GM12878 (cell line): ENCODE measurements at regions of chr1 and their contacts with region 1.

Region 1: DNA sequence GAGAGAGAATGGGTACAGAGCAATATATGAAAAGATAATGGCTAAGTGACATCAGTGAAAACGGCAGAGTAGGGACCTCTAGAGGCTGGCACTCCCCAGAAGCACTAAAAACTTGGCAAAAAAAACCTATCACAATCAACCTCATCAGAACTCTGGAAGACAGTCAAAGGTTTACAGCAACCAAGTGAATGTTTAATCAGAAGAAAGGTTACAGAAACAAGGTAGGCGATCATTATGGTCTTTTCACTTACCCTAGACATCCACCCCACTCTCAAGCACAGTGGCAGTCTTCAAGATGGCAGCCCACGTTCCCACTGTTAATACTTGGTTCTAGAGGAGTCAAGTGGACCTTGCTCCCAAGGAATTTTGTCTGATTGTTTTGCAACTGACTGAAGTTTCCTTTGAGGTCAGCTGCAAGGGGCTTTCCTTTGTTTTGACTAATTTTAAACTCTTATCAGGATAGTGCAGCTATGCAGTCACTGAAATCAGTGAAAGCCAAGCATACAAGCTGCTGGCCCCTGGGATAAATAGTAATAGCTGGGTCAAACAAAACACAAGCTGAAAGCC is 7.2 kb downstream of the KIFAP3 start:
- DNase-seq: peak; percentile 30
- ATAC-seq: peak; percentile 73
- H3K4me3 ChIP-seq: peak overlapping the region; percentile 63
- H3K27ac ChIP-seq: peak overlapping the region; percentile 77
- H3K4me1 ChIP-seq: no peaks in the 10 kb centered on the region
- H3K27me3 ChIP-seq: no peaks in the 10 kb centered on the region
- CTCF ChIP-seq: peak in 2 of 3 experiments; percentile 23 to 57; a peak in 3 of 6 replicates
- EP300 ChIP-seq: 0 out of 4 replicates have a peak, but pooled peaks of 1 of the 2 experiments have one; percentile 10
- POLR2A ChIP-seq: no peak
- RAD21 ChIP-seq: no peak

Region 2: DNA sequence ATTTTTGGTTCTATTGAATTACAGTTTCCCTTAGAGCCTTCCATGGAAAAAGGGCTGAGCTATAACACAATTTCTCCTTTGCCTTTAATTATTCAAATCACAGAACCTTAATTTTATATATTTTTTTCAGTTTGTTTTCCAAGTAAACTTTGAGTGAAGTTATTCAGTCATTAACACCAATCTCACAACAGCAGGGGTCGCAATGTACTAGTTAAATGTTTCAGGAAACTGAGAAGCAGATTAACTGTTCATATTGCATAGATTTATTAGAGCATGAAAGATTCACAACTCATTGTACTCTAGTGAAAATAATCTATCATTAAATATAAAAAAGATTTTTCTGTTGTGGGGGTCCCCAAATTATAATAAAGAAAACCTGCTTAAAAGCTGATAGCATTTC is 56.9 kb before region 1 on chr1:
- CTCF ChIA-PET with region 1: interaction called, 19 read pairs
- POLR2A ChIA-PET with region 1: interaction called, 3 read pairs
- RAD21 ChIA-PET with region 1: interaction called, 5 read pairs
- SMC1A ChIA-PET with region 1: interaction called, 8 read pairs
- in situ Hi-C with region 1: no loop called
- intact Hi-C with region 1: loop called (anchors 5 kb)
- DNase-seq: no peak
- ATAC-seq: peak; percentile 53; the same call in 2 of the 3 replicates
- H3K4me3 ChIP-seq: no peak overlapping the region
- H3K27ac ChIP-seq: no peak overlapping the region
- H3K4me1 ChIP-seq: no peaks in the 10 kb centered on the region
- H3K27me3 ChIP-seq: no peaks in the 10 kb centered on the region
- CTCF ChIP-seq: peak; percentile 13 to 46 (median 25); a peak in 3 of 6 replicates
- EP300 ChIP-seq: no peak
- POLR2A ChIP-seq: no peak
- RAD21 ChIP-seq: peak; percentile 84

Region 3: DNA sequence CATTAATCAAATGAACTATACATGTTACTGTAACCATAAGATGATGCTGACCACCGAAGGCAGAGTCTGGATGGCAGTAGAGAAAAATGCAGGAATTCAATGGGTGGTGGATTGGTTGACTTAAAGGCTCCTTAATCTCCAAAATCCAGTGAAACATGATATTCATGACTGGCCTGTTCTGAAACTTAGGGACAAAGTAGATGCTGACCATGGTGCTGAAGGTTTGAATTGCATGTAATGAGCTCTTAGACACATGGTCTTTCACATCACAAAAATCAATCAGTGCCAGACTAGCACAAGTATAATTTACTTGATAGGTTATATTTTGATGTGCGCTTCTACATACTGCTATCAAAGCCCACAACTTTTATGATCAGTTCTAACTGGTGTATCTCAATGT is 47.6 kb after region 1 on chr1:
- CTCF ChIA-PET with region 1: no interaction called
- POLR2A ChIA-PET with region 1: no interaction called
- RAD21 ChIA-PET with region 1: no interaction called
- SMC1A ChIA-PET with region 1: no interaction called
- in situ Hi-C with region 1: no loop called
- intact Hi-C with region 1: no loop called
- DNase-seq: no peak
- ATAC-seq: no peak
- H3K4me3 ChIP-seq: no peak overlapping the region
- H3K27ac ChIP-seq: no peak overlapping the region
- H3K4me1 ChIP-seq: no peaks in the 10 kb centered on the region
- H3K27me3 ChIP-seq: no peaks in the 10 kb centered on the region
- CTCF ChIP-seq: no peak
- EP300 ChIP-seq: no peak
- POLR2A ChIP-seq: no peak
- RAD21 ChIP-seq: no peak

Region 4: DNA sequence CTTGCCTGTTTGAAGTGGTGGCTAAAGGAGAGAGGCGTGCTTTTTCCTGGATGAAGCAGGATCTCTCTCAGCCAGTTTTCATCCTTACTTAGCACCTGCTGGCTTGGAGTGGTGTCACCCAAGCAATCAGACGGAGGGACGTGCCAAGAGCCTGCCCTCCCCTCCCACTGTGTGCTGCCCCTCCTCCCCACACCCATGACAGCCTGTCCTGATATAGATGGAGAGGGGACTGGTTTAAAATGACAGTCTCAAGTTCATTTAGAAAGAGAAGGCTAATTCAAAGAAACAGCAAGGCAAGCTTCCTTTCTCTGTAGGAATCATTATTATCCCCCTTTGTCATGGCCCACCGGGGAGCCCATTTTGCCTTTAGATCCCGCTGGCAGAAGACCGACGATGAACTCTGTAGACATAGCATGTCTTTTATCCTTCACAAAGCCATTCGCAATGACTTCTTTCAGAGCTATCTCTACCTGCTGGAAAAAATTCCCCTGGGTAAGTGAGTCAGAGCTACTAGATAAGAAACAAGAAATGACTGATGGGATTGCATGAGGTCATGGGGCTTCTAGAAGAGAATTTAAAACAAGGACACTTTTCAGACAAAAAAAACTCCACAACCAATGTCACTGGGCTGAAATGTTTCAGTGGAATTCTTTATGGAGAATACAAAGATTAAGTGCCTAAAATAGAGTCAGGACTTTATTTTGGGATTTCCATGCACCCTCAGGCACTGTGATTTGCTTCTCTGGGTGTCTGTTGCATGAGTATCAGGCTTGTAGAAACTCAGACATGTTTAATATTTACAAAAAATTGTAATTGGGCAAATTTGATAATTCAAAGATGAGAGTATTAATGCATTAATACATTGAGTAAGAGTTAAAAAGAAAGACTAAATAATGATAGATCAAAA is 78.7 kb after region 1 on chr1 and contains the start of gene NTMT2:
- CTCF ChIA-PET with region 1: no interaction called
- POLR2A ChIA-PET with region 1: interaction called, 11 read pairs
- RAD21 ChIA-PET with region 1: no interaction called
- SMC1A ChIA-PET with region 1: no interaction called
- in situ Hi-C with region 1: no loop called
- intact Hi-C with region 1: no loop called
- DNase-seq: no peak
- ATAC-seq: peak; percentile 65
- H3K4me3 ChIP-seq: no peak within 1 kb of the TSS
- H3K27ac ChIP-seq: no peak within 1 kb of the TSS
- H3K4me1 ChIP-seq: no peaks in the 10 kb centered on the region
- H3K27me3 ChIP-seq: no peaks in the 10 kb centered on the region
- CTCF ChIP-seq: no peak
- EP300 ChIP-seq: no peak
- POLR2A ChIP-seq: no peak
- RAD21 ChIP-seq: no peak
- polyA plus RNA-seq, gene NTMT2: not detected

Region 5: GRCh38 chr1:170296642-170297041 is 229.3 kb after region 1 on chr1:
- CTCF ChIA-PET with region 1: no interaction called
- POLR2A ChIA-PET with region 1: no interaction called
- RAD21 ChIA-PET with region 1: no interaction called
- SMC1A ChIA-PET with region 1: no interaction called
- in situ Hi-C with region 1: no loop called
- intact Hi-C with region 1: no loop called
- DNase-seq: no peak
- ATAC-seq: no peak
- H3K4me3 ChIP-seq: no peak overlapping the region
- H3K27ac ChIP-seq: no peak overlapping the region
- H3K4me1 ChIP-seq: no peaks in the 10 kb centered on the region
- H3K27me3 ChIP-seq: no peaks in the 10 kb centered on the region
- CTCF ChIP-seq: no peak
- EP300 ChIP-seq: no peak
- POLR2A ChIP-seq: no peak
- RAD21 ChIP-seq: no peak